Pancreas (tissue), 10 donors: ENCODE measurements at regions of chr16 and their contacts with region 1.

Region 1: DNA sequence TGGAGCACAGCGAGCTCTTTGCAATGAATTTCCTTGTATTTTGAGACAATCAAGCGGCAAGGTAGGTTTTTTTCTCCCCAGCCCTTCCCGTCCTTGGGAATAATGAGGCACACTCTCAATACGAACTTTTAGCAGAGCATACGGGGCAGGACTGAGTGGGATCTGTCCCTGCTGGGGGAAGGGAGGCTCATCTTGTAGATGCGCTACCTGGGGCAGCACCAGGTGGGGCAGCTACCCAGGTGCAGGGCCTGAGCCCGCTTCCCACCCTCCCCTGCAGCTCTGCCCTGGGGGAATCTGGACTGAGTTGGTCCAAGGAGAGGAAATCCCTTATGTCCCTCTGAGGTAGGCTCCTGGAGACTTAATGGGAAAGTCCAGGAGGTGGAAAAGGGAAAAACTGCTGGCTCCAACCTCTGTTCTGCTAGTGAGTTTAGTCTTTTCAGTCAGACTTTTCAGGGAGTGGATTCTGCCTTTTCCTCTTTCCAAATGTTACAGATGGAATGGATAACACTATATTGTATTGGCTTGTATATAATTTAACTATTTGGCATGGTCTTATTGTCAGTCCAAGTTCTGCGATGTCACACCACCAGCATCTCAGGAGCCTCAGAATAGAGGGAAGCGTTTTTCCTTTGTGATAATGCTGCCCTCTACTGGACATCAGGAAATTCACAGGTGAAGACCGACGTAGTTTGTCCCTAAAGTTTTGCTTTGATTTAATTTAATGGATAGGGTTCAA is 9.6 kb upstream of the CES1 start:
- DNase-seq: peak in 1 of 6 donors; percentile 36
- ATAC-seq: peak in 3 of 4 donors; percentile 68 to 82 (median 79)
- H3K4me3 ChIP-seq: no peak overlapping the region
- H3K27ac ChIP-seq: no peak overlapping the region
- H3K4me1 ChIP-seq: no peaks in the 10 kb centered on the region
- H3K27me3 ChIP-seq: no peaks in the 10 kb centered on the region
- CTCF ChIP-seq: peak; percentile 46 to 72 (median 59)

Region 2: DNA sequence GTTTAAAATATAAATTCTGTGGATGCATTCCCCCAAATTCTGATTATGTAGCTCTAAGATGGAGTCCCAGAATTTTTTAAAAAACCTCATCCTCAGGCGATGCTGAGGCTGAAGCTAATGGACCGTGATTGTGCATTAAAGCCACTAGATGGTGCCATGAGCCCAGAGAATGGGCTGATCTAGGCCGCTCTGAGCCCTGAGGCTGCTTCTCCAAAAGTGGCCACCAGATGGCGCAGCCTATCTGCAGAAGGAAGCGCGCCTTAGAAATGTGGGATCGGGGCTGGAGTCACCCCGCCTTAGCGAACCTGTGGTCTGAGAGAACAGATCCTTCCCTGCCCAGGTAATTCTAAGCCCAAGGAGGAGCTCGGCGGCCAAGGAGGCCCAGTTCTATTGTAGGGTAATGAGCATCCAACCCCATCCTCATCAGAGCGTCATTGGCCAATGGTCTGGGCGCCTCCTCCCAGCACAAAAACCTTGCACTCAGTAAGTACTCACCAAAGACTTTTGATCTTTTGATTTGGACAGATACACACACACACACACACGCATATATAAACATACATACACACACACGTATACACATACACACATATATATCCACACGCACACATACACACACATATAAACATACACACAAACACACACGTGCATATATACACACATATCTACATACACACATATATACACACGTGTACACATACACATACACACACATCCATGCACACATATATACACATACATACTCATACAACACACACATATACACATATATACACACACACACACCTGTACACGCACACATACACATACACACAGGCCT is 377.2 kb before region 1 on chr16:
- intact Hi-C with region 1: loop called in 2 of 3 experiments (anchors 10 kb)
- DNase-seq: peak; percentile 69 to 98 (median 90)
- ATAC-seq: peak; percentile 97 to 100 (median 97)
- H3K4me3 ChIP-seq: no peak overlapping the region
- H3K27ac ChIP-seq: no peak overlapping the region
- H3K4me1 ChIP-seq: no peaks in the 10 kb centered on the region
- H3K27me3 ChIP-seq: no peaks in the 10 kb centered on the region
- CTCF ChIP-seq: peak; percentile 99 to 100 (median 99)

Region 3: GRCh38 chr16:55711959-55712876 is 130.3 kb before region 1 on chr16:
- intact Hi-C with region 1: loop called (anchors 2 to 5 kb)
- DNase-seq: peak in 5 of 6 donors; percentile 38 to 81 (median 63)
- ATAC-seq: peak; percentile 61 to 90 (median 86)
- H3K4me3 ChIP-seq: no peak overlapping the region
- H3K27ac ChIP-seq: no peak overlapping the region
- H3K4me1 ChIP-seq: no peaks in the 10 kb centered on the region
- H3K27me3 ChIP-seq: no peaks in the 10 kb centered on the region
- CTCF ChIP-seq: peak; percentile 33 to 62 (median 52)

Region 4: GRCh38 chr16:55717326-55717725 is 125.2 kb before region 1 on chr16:
- intact Hi-C with region 1: loop called in 2 of 3 experiments (anchors 5 kb)
- DNase-seq: no peak
- ATAC-seq: no peak
- H3K4me3 ChIP-seq: no peak overlapping the region
- H3K27ac ChIP-seq: no peak overlapping the region
- H3K4me1 ChIP-seq: no peaks in the 10 kb centered on the region
- H3K27me3 ChIP-seq: no peaks in the 10 kb centered on the region
- CTCF ChIP-seq: no peak

Region 5: GRCh38 chr16:55779391-55780094 is 63.0 kb before region 1 on chr16:
- intact Hi-C with region 1: no loop called
- DNase-seq: no peak
- ATAC-seq: no peak
- H3K4me3 ChIP-seq: no peak overlapping the region
- H3K27ac ChIP-seq: no peak overlapping the region
- H3K4me1 ChIP-seq: peaks cover 0 to 5% (median 0%) of the 10 kb centered on the region in 3 donors
- H3K27me3 ChIP-seq: no peaks in the 10 kb centered on the region
- CTCF ChIP-seq: no peak